GM23248 (cell line): ENCODE measurements at regions of chr2 and their contacts with region 1.

Region 1: DNA sequence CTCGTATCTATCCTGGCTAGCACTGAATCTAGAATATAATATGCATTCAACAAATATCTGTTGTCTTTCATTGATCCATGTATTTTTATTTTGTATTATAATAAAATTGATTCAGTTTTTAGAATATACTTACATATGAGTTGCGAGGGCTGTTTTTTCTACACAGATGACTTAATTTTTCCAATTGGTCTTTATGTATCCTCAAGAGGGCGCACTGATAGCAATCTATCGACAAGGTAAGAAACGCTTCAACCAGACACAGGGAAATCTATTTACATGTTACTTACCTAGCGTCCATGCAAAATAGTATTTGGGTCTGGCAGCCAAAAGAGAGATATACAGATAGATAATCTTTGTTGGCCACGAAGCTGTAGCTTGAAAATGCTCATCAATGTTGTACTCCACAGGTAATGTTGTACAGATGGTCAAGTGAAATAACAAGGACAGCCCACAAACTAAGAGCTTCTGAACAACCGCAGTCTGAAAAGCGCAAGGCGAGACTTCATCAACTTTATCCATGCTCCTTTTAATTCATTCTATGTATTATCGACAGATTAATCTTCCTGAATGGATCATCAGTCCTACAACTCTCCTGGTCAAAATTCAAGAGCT is 35.5 kb upstream of the KIDINS220 start:
- DNase-seq: peak; percentile 82
- H3K4me3 ChIP-seq: no peak overlapping the region
- H3K27ac ChIP-seq: no peak overlapping the region
- H3K4me1 ChIP-seq: no peaks in the 10 kb centered on the region
- H3K27me3 ChIP-seq: no peaks in the 10 kb centered on the region

Region 2: DNA sequence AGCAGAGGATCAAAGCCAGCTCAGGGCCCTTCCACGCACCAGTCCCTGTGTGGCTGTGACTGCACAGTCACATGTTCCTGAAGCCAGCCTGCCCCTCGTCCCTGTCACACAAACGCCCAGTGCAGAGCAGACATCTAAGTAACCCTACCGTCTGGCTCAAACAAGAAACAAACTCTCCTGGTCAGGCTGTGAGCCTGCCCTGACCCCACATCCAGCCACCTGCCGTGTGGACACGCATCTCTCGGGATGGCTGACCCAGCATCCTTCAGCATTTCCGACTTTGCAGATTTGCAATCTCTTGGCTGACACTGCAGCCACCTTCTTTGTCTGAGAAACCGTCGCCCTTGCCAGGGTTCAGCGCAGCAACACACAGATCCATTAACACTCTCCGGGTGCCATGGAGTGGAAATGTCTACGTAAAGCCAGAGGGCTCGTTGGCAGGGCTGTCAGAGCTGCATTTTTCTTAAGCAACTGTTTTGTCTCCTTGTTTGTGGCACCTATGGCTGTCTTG is 251.4 kb after region 1 on chr2:
- in situ Hi-C with region 1: loop called (anchors 10 kb)
- DNase-seq: no peak
- H3K4me3 ChIP-seq: no peak overlapping the region
- H3K27ac ChIP-seq: no peak overlapping the region
- H3K4me1 ChIP-seq: no peaks in the 10 kb centered on the region
- H3K27me3 ChIP-seq: no peaks in the 10 kb centered on the region

Region 3: GRCh38 chr2:9287400-9288043 is 414.6 kb after region 1 on chr2:
- in situ Hi-C with region 1: no loop called
- DNase-seq: peak; percentile 99
- H3K4me3 ChIP-seq: peak overlapping the region; percentile 43
- H3K27ac ChIP-seq: peak overlapping the region; percentile 98
- H3K4me1 ChIP-seq: peaks cover 49% of the 10 kb centered on the region
- H3K27me3 ChIP-seq: no peaks in the 10 kb centered on the region